PC-3 (cell line): ENCODE measurements at regions of chr2 and their contacts with region 1.

Region 1: DNA sequence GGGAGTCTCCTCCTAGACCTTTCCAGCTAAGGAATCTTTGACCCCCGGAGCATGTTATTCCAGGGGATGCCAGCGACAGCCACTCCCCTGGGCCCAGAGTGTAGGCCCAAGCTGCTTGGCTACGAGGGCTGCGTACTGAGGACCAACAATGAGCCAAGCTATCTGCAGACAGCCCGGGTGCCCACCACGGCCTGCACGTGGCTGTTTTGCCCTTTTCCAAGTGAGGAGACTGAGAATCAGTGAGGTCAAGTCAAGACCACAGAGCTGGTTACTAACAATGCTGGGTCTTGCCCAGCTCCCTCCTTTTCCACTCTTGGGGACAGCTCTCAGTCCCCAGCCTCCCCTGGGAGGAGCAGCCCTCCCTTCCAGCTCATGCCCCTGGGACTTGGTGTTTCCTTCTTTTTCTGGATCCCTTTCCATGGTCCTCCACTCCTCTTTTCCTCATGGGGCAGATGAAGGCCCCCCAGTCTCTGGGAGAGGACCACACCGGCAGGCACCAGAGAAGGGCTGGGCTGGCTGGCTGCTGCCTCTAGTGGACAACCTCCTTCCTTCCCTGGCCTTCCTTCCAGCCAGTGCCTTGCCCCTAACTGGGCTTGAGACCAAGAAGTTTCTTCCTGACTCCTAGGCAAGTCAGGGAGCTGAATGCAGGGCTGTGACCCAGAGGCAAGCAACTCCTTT is 550 bp upstream of the MALL start:
- DNase-seq: peak; percentile 71
- ATAC-seq: peak; percentile 53
- H3K4me3 ChIP-seq: peak overlapping the region; percentile 98
- H3K27ac ChIP-seq: peak overlapping the region; percentile 90
- H3K4me1 ChIP-seq: peaks cover 28% of the 10 kb centered on the region
- H3K27me3 ChIP-seq: no peaks in the 10 kb centered on the region
- CTCF ChIP-seq: peak; percentile 80

Region 2: DNA sequence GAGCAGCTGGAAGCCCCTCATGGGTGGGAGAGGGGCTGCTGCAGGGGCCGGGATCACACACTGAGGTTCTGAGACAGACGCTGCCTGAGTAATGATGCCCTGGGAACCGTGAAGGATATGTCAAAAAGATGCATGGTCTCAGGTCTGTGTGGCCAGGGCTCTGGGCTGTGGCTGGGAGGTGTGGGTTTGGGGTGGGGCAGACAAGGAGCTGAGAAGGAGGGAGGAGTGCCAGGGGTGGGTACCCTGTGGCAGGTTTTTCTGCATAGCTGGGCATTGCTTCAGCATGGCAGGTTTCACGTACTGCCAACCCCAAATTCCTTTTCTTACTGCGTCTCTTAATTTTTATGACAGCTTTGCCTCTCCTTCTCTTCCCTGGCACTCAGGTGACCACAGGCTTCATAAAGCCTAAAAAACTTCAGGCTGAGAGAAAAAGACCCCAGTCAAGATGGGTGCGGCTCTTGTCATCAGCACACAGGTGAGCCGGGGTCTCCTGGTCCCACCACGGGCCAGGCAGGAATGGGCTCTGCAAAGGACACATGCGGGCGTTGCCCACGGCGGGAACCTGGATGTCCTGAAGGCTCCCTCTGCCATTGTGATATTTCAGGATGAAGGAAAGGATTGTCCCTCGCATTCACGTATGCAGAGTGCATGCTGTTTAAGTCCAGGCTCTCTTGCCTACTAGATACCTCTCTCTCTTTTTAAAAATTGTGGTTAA is 18.5 kb before region 1 on chr2:
- CTCF ChIA-PET with region 1: no interaction called
- POLR2A ChIA-PET with region 1: interaction called, 10 read pairs
- intact Hi-C with region 1: no loop called
- DNase-seq: peak; percentile 62
- ATAC-seq: no peak
- H3K4me3 ChIP-seq: no peak overlapping the region
- H3K27ac ChIP-seq: peak overlapping the region; percentile 21; the same call in 1 of the 2 replicates
- H3K4me1 ChIP-seq: peaks cover 38% of the 10 kb centered on the region
- H3K27me3 ChIP-seq: no peaks in the 10 kb centered on the region
- CTCF ChIP-seq: no peak

Region 3: GRCh38 chr2:110105608-110106467 is 10.3 kb before region 1 on chr2:
- CTCF ChIA-PET with region 1: interaction called, 21 read pairs
- POLR2A ChIA-PET with region 1: interaction called, 15 read pairs
- intact Hi-C with region 1: loop called (anchors 1 kb)
- DNase-seq: peak; percentile 99
- ATAC-seq: peak; percentile 57
- H3K4me3 ChIP-seq: peak overlapping the region; percentile 41
- H3K27ac ChIP-seq: peak overlapping the region; percentile 98
- H3K4me1 ChIP-seq: peaks cover 79% of the 10 kb centered on the region
- H3K27me3 ChIP-seq: no peaks in the 10 kb centered on the region
- CTCF ChIP-seq: no peak

Region 4: GRCh38 chr2:110157153-110157793 is 41.1 kb after region 1 on chr2:
- CTCF ChIA-PET with region 1: interaction called, 4 read pairs
- POLR2A ChIA-PET with region 1: interaction called, 12 read pairs
- intact Hi-C with region 1: loop called (anchors 1 kb)
- DNase-seq: peak; percentile 82
- ATAC-seq: peak; percentile 89
- H3K4me3 ChIP-seq: no peak overlapping the region
- H3K27ac ChIP-seq: peak overlapping the region; percentile 95
- H3K4me1 ChIP-seq: peaks cover 8% of the 10 kb centered on the region
- H3K27me3 ChIP-seq: no peaks in the 10 kb centered on the region
- CTCF ChIP-seq: peak; percentile 88

Region 5: GRCh38 chr2:110198016-110198415 is 81.8 kb after region 1 on chr2:
- CTCF ChIA-PET with region 1: no interaction called
- POLR2A ChIA-PET with region 1: no interaction called
- intact Hi-C with region 1: no loop called
- DNase-seq: no peak
- ATAC-seq: no peak
- H3K4me3 ChIP-seq: no peak overlapping the region
- H3K27ac ChIP-seq: no peak overlapping the region
- H3K4me1 ChIP-seq: no peaks in the 10 kb centered on the region
- H3K27me3 ChIP-seq: no peaks in the 10 kb centered on the region
- CTCF ChIP-seq: no peak

Region 6: DNA sequence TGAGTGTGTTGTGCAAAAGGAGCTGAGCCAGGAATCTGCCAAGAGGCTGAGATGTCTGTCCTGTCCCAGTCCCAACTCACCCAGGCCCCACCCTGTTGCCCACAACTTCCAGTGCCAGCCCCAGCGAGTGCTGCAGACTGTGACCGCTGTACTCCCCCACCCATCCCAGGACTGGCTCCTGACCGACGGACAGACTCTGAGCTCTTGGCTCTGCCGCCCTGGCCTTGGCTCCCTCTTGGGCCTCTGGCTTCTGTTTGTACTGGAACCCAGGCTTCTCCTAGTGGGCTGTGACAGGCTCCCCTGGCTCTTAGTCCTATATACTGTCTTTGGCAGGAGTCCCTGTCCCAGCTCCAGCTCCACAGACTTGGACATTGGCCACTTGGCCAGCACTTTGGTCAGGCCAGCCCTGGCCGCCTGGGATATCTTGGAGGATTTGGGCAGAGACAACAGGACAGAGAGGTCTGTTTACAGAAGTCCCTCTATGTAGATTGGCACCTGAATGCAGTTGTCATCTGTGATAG is 657.3 kb after region 1 on chr2:
- CTCF ChIA-PET with region 1: no interaction called
- POLR2A ChIA-PET with region 1: no interaction called
- intact Hi-C with region 1: no loop called
- DNase-seq: no peak
- ATAC-seq: no peak
- H3K4me3 ChIP-seq: no peak overlapping the region
- H3K27ac ChIP-seq: no peak overlapping the region
- H3K4me1 ChIP-seq: peaks cover 21% of the 10 kb centered on the region
- H3K27me3 ChIP-seq: no peaks in the 10 kb centered on the region
- CTCF ChIP-seq: no peak